Activated B cell treated with CpG ODN at 0.5 μM for 24 hours (primary cell): ENCODE measurements at regions of chr2 and their contacts with region 1.

Region 1: DNA sequence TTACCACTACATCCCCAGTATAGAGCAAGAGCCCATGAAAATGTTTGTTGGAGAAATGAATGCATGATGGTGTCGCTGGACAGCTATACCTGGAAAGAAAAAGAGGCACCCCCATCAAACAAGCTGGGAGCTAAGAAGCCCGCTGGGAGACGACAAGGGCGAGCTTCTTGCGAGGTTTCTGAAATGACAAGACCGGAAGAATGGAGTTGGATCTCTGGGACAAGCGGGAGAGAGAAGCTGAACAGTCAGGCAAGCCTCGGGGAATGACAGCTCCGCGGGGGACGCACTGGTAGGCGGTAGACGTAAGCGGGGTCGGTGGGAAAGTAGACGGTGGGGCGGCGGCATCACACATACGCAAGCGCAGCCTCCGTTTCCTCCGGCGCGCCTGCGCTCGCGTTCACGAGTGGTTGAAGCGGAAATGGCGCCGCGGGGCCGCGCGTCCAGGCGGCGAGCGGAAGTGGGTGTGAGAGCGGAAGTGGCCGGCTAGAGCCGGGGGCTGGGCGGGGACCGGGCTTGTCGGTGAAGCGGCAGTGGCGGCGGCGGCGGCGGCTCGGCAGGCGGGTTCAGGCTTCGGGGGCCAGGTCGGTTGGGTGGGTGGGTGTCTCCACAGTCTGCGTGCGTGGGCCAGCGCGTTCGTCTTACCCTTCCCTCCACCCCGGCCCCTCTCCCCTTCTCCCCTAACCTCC is at the start of gene ARPC2:
- DNase-seq: peak; percentile 95
- ATAC-seq: peak; percentile 63
- H3K4me3 Mint-ChIP-seq: peak within 1 kb of the TSS; percentile 98
- H3K27ac Mint-ChIP-seq: peak within 1 kb of the TSS; percentile 99
- H3K4me1 Mint-ChIP-seq: peaks cover 45% of the 10 kb centered on the region
- H3K27me3 Mint-ChIP-seq: no peaks in the 10 kb centered on the region
- CTCF ChIP-seq: no peak
- total RNA-seq, gene ARPC2: 711 and 737 TPM in 2 replicates

Region 2: GRCh38 chr2:217886720-217887309 is 330.0 kb before region 1 on chr2:
- CTCF ChIA-PET with region 1: no interaction called
- POLR2A ChIA-PET with region 1: no interaction called
- intact Hi-C with region 1: no loop called
- DNase-seq: peak; percentile 47
- ATAC-seq: peak; percentile 71
- H3K4me3 Mint-ChIP-seq: no peak overlapping the region
- H3K27ac Mint-ChIP-seq: no peak overlapping the region
- H3K4me1 Mint-ChIP-seq: peaks cover 18% of the 10 kb centered on the region
- H3K27me3 Mint-ChIP-seq: no peaks in the 10 kb centered on the region
- CTCF ChIP-seq: peak; percentile 27

Region 3: DNA sequence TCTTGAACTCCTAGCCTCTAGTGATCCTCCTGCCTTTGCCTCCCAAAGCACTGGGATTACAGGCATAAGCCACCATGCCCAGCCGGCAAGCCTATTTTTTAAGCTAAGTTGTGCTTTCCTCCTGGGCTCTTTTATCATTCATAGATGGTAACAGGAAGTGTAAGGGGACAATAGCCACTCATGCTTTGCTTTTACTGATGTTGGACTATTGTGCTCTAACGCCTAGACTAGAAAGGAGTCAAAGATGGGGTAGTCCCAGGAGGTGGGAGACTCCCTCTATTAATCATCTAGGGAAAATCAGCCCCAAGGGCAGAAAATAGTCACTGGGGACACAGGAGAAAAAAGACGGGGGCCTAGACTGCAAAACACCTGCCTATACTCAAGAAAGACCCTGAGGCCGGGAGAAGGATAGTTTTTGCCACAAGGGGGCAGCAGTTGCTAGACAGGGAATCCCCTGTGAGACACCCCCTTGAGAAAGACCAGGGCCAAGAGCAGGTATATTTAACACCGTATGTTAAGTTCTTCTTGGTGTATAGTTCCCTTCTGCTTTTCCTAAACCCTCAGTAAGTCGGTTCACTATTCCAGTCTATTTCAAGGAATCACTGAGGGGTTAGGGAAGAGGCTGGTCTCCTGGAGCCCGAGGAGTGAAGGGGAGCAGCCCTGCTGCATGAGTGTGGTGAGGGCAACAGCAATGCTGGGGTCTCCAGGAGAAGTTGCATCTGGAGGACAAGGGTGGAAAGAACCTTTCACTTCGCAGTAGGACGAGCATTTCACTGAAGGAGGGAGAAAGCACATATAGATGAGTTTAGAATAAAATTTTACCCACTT is 48.0 kb before region 1 on chr2:
- CTCF ChIA-PET with region 1: no interaction called
- POLR2A ChIA-PET with region 1: interaction called, 6 read pairs
- intact Hi-C with region 1: loop called (anchors 1 kb)
- DNase-seq: peak; percentile 41
- ATAC-seq: peak; percentile 79
- H3K4me3 Mint-ChIP-seq: no peak overlapping the region
- H3K27ac Mint-ChIP-seq: no peak overlapping the region
- H3K4me1 Mint-ChIP-seq: peaks cover 25% of the 10 kb centered on the region
- H3K27me3 Mint-ChIP-seq: peaks cover 18% of the 10 kb centered on the region
- CTCF ChIP-seq: peak; percentile 30

Region 4: DNA sequence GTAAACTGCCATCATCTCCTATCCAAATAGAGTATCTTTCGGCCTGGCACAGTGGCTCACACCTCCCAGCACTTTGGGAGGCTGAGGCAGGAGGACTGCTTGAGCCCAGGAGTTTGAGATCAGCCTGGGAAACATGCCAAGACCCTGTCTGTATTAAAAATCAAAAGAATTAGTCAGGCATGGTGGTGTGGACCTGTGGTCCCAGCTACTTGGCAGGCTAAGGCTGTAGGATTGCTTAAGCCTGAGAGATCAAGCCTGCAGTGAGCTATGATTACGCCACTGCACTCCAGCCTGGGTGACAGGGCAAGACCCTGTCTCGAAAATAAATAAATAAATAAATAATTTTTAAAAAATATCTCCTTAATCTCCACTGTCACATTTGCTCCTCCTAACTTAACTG is 14.6 kb before region 1 on chr2:
- CTCF ChIA-PET with region 1: no interaction called
- POLR2A ChIA-PET with region 1: interaction called, 3 read pairs
- intact Hi-C with region 1: loop called (anchors 1 kb)
- DNase-seq: no peak
- ATAC-seq: no peak
- H3K4me3 Mint-ChIP-seq: no peak overlapping the region
- H3K27ac Mint-ChIP-seq: no peak overlapping the region
- H3K4me1 Mint-ChIP-seq: no peaks in the 10 kb centered on the region
- H3K27me3 Mint-ChIP-seq: peaks cover 9% of the 10 kb centered on the region
- CTCF ChIP-seq: no peak

Region 5: GRCh38 chr2:218257390-218257981 is 40.7 kb after region 1 on chr2:
- CTCF ChIA-PET with region 1: interaction called, 8 read pairs
- POLR2A ChIA-PET with region 1: interaction called, 94 read pairs
- intact Hi-C with region 1: loop called (anchors 1 kb)
- DNase-seq: peak; percentile 67
- ATAC-seq: peak; percentile 89
- H3K4me3 Mint-ChIP-seq: peak overlapping the region; percentile 73
- H3K27ac Mint-ChIP-seq: peak overlapping the region; percentile 92
- H3K4me1 Mint-ChIP-seq: peaks cover 70% of the 10 kb centered on the region
- H3K27me3 Mint-ChIP-seq: no peaks in the 10 kb centered on the region
- CTCF ChIP-seq: no peak

Region 6: DNA sequence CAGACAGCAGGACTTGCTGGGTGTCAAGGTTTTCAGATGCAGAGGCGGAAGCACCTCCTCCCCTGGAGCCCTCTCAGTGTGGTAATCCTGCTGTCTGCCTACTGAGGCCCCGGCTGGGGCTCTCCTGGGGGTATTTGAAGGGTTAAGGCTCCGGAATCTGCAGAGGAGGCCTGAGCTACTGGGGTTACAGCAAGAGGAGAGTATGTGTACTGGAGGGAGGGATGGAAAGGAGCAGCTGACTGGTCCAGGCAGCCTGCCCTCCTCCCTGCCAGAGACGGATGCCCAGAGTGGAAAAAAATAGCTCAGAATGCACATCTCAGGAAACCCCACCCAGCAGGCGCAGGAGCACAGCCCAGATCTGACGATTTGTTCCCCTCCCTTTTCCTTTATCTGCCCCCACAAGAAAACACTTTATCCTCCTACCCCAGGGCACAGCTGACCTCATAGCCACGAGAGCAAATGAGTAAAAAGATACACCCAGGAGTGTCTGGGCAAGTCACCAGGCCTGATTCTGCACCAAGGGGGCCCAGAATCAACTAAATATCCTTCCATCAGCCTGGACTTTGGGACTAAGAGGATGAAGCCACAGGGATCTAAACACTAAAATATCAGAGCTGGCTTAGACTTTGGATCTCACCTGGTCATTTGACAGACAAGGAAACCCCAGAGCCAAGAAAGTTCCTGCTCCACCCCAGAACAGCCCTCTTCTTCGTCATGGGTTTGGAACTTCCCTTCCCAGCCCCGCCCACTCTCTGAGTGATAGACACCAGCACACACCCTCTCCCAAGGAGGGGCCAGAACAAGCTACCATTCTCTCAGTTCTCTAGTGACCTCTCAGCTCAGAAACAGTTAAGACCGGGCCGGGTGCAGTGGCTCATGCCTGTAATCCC is 70.0 kb after region 1 on chr2:
- CTCF ChIA-PET with region 1: no interaction called
- POLR2A ChIA-PET with region 1: interaction called, 19 read pairs
- intact Hi-C with region 1: loop called (anchors 1 kb)
- DNase-seq: peak; percentile 63
- ATAC-seq: peak; percentile 73
- H3K4me3 Mint-ChIP-seq: peak overlapping the region; percentile 77
- H3K27ac Mint-ChIP-seq: peak overlapping the region; percentile 94
- H3K4me1 Mint-ChIP-seq: peaks cover 91% of the 10 kb centered on the region
- H3K27me3 Mint-ChIP-seq: no peaks in the 10 kb centered on the region
- CTCF ChIP-seq: no peak

Region 7: DNA sequence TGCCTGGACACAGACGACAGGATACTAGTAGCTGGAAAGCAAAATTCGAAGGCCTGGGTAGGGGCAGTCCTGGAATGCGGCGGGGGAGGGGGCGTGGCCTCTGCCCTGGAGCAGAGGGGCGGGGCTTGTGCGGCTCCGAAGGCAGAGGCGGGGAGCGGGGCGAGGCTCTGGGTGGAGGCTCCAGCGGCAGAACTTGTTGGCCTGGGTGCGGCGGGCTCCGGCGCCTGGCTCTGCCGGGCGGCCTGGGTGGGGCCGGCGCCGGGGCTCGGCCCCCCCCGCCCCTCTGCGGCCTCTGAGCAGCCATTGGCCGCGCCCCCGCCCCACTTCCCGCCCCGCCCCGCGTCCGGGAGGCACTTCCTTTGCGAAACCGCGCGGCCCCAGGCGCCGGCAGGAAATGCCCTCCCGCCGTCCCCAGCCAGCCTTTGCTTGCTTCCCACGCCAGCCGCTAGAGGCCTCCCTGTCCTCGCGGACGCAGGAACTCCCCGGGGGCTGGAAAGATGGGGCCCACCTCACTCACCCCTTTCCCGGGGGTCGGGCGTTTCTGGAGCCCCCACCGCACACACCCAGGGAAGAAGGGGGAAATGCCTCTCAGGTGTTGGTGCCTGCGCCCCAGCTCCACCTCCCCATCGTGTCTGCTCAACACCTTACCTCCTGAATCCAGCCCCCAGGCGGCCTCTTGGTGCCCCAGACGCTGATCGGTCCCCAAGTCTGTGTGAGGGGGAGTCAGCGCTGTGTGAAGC is 189.6 kb after region 1 on chr2:
- CTCF ChIA-PET with region 1: no interaction called
- POLR2A ChIA-PET with region 1: interaction called, 3 read pairs
- intact Hi-C with region 1: loop called (anchors 1 kb)
- DNase-seq: peak; percentile 89
- ATAC-seq: peak; percentile 83
- H3K4me3 Mint-ChIP-seq: peak overlapping the region; percentile 85
- H3K27ac Mint-ChIP-seq: peak overlapping the region; percentile 86
- H3K4me1 Mint-ChIP-seq: peaks cover 54% of the 10 kb centered on the region
- H3K27me3 Mint-ChIP-seq: no peaks in the 10 kb centered on the region
- CTCF ChIP-seq: no peak

Region 8: DNA sequence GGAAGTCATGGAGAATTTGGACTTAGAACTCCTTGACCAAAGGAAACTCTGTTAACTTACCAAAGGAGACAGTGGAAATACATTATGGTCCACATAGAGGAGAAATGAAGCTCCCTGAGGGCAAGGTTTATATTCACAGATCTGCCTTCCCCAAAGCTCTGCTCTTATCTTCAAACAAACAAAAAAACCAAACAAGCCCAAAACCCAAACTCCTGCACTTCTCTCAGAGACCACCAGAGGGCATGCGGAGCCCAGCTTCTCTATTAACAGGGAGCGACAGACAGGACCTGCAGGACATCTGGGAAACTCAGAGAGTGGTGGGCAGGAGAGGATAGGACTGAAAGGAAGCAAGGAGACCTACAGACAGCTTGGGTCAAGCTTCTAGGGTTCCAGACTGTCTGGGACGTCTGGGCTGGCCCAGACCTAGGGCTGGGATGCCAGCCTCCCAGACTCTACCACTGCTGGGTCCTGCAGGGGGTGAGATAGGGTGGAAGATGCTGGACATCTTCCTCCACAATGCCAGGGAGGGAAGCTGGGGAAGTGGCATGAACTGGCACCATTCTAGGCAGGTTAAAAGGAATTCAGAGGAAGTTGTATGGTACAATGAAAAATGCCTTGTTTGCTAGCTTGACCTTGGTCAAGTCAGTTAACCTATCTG is 659.9 kb after region 1 on chr2:
- CTCF ChIA-PET with region 1: no interaction called
- POLR2A ChIA-PET with region 1: interaction called, 3 read pairs
- intact Hi-C with region 1: loop called (anchors 5 kb)
- DNase-seq: peak; percentile 58
- ATAC-seq: no peak
- H3K4me3 Mint-ChIP-seq: no peak overlapping the region
- H3K27ac Mint-ChIP-seq: no peak overlapping the region
- H3K4me1 Mint-ChIP-seq: peaks cover 55% of the 10 kb centered on the region
- H3K27me3 Mint-ChIP-seq: peaks cover 19% of the 10 kb centered on the region
- CTCF ChIP-seq: peak; percentile 65